WTC11 (cell line): ENCODE measurements at regions of chr2 and their contacts with region 1.

Region 1: DNA sequence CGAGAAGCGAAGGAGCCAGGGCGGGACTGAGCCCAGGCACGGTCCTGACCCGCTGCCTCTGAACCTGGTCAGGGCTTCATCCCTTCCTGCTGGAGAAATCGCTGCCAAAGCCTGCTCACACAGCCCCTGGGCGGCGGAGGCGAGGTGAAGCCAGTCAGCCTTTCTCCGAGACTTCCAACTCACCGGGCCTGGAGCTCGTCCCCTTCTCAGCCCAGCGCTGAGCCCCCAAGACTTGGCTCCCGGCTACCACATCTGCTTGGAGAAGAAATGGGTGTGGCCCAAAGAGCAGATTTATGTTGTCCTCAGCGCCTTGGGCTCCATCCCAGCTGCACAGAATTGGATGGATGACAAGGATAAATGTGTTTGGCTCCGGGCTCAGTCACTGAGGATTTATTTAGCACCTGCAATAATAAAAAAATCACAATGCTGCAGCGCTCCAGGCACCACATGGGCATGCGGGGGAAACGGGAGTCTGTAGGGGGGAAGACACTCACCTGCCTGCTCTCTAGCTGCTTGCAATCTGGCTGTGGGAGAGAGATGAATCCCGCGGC is 64.9 kb downstream of the ACTR2 start:
- DNase-seq: no peak
- ATAC-seq: peak; percentile 25
- H3K4me3 Mint-ChIP-seq: no peak overlapping the region
- H3K27ac Mint-ChIP-seq: no peak overlapping the region
- H3K4me1 Mint-ChIP-seq: peaks cover 21% of the 10 kb centered on the region
- H3K27me3 Mint-ChIP-seq: peaks cover 16% of the 10 kb centered on the region
- CTCF ChIP-seq: no peak

Region 2: DNA sequence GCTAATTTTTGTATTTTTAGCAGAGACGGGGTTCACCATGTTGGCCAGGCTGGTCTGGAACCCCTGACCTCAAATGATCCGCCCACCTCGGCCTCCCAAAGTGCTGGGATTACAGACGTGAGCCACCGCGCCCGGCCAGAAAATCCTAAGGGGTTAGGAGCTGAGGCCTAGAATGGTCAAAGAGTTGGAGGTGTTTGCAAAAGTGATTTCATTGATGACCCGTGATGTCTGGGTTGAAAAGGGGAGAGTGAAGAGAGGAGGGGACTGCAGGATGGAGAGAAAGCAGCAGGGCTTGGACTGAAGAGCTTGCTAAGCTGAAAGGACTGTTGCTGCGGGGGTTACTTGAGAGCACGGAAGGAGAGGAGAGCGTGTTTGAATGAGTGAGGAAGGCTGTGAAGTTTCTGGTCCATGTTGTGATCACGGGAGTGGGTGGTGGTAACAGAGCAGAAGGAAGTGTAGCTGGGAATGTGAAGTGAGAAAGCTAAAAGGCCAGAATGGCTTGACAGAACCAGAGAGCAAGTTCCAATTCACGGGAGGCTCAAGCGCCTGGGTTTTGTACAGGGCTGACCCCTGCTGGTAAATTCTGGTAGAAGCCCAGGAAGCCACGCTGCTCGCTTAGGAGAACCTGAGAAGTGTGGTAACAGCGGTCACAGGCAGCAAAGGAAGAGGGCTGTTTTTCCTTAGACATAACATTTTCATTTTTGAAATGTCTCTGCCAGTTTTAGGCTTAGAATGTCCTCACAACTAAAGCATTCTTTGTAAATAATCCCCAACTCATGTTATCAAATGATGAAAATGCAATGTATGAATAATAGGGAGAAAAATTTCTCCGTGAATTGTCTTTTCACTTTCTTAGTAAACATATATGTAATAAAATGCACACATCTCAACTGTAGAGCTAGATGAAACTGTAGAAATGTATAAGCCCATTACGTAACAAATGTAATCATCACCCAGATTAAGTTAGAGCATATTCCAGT is 105.4 kb before region 1 on chr2:
- CTCF ChIA-PET with region 1: no interaction called
- POLR2A ChIA-PET with region 1: no interaction called
- DNase-seq: peak; percentile 82
- ATAC-seq: peak; percentile 98
- H3K4me3 Mint-ChIP-seq: no peak overlapping the region
- H3K27ac Mint-ChIP-seq: no peak overlapping the region; the same call in 1 of the 2 replicates
- H3K4me1 Mint-ChIP-seq: peaks cover 6% of the 10 kb centered on the region
- H3K27me3 Mint-ChIP-seq: peaks cover 16% of the 10 kb centered on the region
- CTCF ChIP-seq: peak; percentile 45; the same call in 1 of the 2 replicates

Region 3: GRCh38 chr2:65579506-65580235 is 287.1 kb after region 1 on chr2:
- CTCF ChIA-PET with region 1: no interaction called
- POLR2A ChIA-PET with region 1: interaction called, 11 read pairs
- DNase-seq: peak; percentile 50
- ATAC-seq: peak; percentile 84
- H3K4me3 Mint-ChIP-seq: no peak overlapping the region
- H3K27ac Mint-ChIP-seq: peak overlapping the region; percentile 84
- H3K4me1 Mint-ChIP-seq: peaks cover 22% of the 10 kb centered on the region
- H3K27me3 Mint-ChIP-seq: no peaks in the 10 kb centered on the region
- CTCF ChIP-seq: no peak